ENCODE measurements at regions of chr6 and their contacts with region 1.

Region 1: GRCh38 chr6:137707590-137708360 is 159.3 kb upstream of the TNFAIP3 start:
- H3K4me3 ChIP-seq: no peak overlapping the region
- H3K27ac ChIP-seq: no peak overlapping the region
- H3K4me1 ChIP-seq: no peaks in the 10 kb centered on the region
- CTCF ChIP-seq: peak; percentile 66; the same call in 1 of the 2 replicates

Region 2: GRCh38 chr6:137497721-137498463 is 209.9 kb before region 1 on chr6:
- CTCF ChIA-PET with region 1: no interaction called
- POLR2A ChIA-PET with region 1: no interaction called
- H3K4me3 ChIP-seq: peak overlapping the region; percentile 47
- H3K27ac ChIP-seq: no peak overlapping the region
- H3K4me1 ChIP-seq: no peaks in the 10 kb centered on the region
- CTCF ChIP-seq: no peak

Region 3: DNA sequence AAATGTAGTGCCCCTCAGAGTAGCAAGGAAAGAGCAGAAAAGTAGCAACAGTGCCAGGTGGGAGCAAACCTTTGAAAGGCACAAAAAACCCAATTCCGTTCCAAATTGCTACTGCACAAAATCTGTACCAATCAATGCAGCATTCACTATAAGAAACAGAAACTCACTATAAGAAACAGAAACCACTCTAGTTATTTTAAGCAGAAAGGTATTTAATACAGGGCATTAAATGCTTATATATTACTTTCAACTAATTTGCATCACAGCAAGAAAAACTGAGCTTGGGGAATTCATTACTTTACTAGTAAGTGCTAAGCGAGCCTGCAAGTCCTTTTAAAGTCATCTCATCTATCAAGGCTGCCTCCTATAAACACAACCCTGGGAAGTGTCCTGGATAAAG is 97.1 kb before region 1 on chr6:
- CTCF ChIA-PET with region 1: no interaction called
- POLR2A ChIA-PET with region 1: no interaction called
- H3K4me3 ChIP-seq: no peak overlapping the region
- H3K27ac ChIP-seq: no peak overlapping the region
- H3K4me1 ChIP-seq: no peaks in the 10 kb centered on the region
- CTCF ChIP-seq: no peak

Region 4: DNA sequence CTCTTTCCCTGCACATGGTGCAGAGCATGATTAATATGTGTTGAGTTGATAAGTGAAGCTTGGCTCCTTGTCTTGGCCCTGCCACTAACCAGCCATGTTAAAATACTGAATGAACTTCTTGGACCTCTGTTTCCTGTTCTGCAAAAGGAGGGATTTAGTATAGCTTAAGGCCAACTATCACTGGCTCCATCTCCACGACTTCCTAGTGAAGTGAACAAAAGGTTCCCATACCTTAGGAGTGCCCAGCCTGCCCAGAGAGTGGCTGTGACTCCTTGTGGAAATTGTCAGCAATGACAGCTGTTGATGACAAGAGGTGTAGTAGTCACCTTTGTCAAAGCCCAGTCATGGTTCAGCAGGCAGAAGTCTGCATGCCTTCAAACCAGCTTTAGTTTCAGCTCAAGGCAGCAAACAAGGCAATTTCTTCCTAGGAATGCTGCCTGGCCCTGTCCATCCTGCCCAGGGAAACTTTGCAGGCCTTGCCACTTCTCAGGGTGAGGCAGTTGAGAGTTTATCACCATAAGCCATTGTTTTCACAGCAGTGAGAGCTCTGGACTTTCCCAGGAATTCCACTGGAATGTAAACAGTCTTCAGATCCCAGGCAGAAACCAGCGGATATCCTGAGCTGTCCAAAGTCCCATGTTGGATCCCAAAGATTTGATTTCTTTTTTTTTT is 10.4 kb before region 1 on chr6:
- CTCF ChIA-PET with region 1: interaction called, 19 read pairs
- POLR2A ChIA-PET with region 1: no interaction called
- H3K4me3 ChIP-seq: no peak overlapping the region
- H3K27ac ChIP-seq: no peak overlapping the region
- H3K4me1 ChIP-seq: no peaks in the 10 kb centered on the region
- CTCF ChIP-seq: no peak

Region 5: DNA sequence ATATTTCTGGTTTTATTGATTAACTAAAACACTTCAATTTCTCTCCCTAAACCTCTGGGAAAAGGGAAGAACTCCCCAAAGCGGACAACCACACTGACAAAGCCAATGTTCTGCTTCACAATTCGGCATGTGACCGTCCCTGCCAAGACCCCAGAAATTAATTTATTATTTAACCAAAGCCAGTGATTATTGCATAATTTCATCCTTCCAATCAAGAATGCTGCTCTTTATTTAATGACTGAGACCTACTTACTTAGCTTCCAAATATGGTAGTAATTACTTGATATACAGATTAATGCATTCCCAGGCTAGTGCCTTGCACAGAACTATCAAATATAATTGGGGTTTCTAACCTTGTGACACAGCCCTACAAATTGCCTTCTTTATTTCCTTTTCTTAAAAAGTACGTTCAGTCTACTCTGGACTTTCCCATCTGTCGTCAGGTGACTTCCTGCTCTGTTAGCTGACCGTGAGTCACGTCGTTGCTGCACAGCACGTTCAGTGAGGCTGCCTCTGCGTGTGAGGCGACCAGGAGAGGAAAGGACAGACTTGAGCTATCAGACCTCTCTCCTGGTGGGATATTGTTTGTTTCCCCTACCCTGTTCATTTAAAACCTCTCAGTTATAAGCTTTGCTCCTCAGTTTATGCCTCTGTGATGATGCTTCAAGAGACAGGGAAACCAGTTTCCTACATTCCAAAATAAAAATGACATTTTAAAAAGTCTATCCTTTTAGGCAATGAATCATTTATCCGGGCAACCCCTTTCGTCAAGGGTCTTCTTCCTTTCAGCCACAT is 103.5 kb after region 1 on chr6:
- CTCF ChIA-PET with region 1: interaction called, 11 read pairs
- POLR2A ChIA-PET with region 1: no interaction called
- H3K4me3 ChIP-seq: no peak overlapping the region
- H3K27ac ChIP-seq: no peak overlapping the region
- H3K4me1 ChIP-seq: peaks cover 5% of the 10 kb centered on the region; the same call in 1 of the 2 replicates
- CTCF ChIP-seq: no peak

Region 6: DNA sequence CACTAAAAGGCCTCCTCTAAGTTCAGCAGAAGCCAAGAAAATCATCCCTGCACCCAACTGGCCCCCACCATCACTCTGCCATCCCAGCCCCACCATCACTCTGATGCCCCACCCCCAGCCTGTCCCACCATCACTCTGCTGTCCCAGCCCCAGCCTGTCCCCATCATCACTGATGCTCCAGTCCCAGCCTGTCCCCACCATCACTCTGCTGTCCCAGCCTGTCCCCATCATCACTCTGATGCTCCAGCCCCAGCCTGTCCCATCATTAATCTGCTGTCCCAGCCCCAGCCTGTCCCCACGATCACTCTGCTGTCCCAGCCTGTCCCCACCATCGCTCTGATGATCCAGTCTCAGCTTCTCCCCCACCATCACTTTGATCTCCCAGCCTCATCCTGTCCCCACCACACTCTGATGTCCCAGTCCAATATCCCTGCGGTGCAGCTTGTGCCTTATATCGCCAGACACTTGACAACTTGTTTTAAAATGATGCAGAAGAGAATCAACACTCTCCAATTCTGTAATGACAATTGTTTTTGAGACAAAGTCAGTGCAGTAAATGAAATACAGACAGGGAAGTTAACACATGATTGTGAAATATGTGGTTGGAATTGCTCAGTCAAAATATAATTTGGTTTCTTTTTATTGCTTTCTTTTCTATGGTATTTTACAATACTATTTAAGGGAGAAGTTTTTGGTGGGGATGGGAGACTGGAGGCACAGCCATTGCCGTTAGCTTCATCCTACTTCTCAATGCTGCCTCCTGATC is 260.1 kb after region 1 on chr6:
- CTCF ChIA-PET with region 1: interaction called, 12 read pairs
- POLR2A ChIA-PET with region 1: no interaction called
- H3K4me3 ChIP-seq: no peak overlapping the region
- H3K27ac ChIP-seq: no peak overlapping the region
- H3K4me1 ChIP-seq: no peaks in the 10 kb centered on the region
- CTCF ChIP-seq: no peak

Region 7: DNA sequence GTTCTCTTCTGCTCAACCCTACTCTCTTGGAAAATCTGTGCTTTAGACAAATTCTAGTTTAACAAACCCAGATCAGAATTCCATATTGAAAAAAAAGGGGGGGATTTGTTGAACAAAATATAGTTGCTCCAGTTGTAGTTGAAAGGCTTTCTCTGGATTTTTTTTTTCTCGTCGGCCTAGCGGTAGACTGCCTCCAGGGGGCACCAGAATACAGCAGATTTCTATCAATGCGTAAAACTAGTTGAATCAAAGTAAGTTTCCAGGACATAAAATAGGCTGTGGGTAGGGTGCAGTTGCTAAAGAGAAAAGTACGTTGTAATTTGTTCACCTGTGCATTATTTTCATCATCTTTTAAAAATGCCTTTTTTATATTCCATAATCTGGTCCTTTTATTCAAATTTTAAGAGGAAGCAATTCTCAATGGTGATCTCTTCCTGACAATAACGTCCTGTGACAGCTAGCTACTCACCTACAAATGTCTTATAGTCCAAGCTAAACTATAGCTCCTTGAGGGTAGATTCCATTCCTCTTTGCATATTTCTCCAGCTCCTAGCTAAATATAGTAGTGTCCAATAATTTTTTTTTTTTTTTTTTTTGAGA is 294.1 kb after region 1 on chr6:
- CTCF ChIA-PET with region 1: interaction called, 101 read pairs
- POLR2A ChIA-PET with region 1: interaction called, 6 read pairs
- H3K4me3 ChIP-seq: no peak overlapping the region
- H3K27ac ChIP-seq: no peak overlapping the region
- H3K4me1 ChIP-seq: no peaks in the 10 kb centered on the region
- CTCF ChIP-seq: peak; percentile 45; the same call in 1 of the 2 replicates